HepG2 (cell line): ENCODE measurements at regions of chr9 and their contacts with region 1.

Region 1: DNA sequence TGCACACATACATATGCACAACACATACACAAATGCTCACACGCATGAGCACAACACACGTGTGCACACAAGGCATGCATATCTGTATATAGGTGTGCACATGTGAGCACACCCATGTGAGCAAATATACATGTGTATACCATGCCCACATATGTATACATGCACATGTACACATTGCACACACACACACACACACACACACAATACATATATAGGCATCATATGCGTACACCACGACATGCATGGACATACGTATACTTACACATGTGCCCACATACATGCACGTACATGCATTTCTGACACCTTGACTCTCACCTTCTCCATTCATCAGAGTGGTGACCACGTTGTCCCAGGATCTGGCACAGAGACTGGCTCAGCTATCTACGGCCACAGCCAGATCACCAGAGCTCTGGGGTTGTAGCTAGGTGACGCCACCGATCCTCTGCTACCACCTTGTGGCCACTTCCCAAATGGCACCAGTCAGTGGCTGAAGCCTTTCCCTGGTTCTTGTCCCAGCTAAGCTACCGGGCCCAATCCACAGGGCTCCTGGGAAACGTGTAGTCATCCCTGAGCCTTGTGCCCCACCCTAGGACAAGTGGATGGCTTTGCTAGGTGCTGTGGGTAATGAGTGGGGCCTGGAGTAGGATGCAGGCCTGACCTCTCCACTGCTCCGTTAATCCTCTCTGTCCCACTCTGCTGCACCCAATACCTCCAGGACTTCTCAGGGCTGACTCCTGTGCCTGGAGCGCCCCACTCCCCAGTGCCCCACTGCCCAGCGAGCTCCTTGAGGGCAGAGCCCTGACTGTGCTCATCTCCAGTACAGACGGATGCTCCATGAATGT is 194.4 kb downstream of the RGS3 start:
- DNase-seq: peak; percentile 73
- ATAC-seq: peak; percentile 92
- H3K4me3 ChIP-seq: no peak overlapping the region
- H3K27ac ChIP-seq: no peak overlapping the region
- H3K4me1 ChIP-seq: peaks cover 65% of the 10 kb centered on the region
- H3K27me3 ChIP-seq: peaks cover 0 to 19% of the 10 kb centered on the region in 2 experiments; a peak in 2 of 5 replicates
- CTCF ChIP-seq: peak; percentile 99
- EP300 ChIP-seq: no peak
- POLR2A ChIP-seq: no peak
- RAD21 ChIP-seq: peak; percentile 99

Region 2: DNA sequence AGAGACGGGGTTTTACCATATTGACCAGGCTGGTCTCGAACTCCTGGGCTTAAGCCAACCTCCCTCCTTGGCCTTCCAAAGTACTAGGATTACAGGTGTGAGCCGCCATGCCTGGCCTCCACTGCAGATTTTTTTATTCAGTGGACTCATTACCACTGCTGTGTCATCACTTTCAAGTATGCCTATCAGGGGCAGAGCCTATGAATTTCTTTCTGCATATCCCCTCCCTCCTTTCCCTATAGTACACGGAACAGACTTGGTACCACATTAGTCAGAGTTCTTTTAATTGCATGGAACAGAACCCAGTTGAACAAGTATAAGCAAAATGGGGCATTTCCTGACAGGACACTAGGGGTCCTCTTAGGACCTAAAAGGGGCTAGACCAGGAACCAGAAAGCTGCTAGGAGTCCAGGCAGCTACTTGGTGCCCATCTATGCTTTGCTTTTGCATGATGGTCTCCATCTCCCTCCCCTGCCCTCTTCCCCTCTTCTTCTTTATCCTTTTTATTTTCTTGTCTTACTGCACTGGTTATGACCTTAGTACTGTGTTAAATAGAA is 302.8 kb before region 1 on chr9:
- CTCF ChIA-PET with region 1: interaction called, 3 read pairs
- POLR2A ChIA-PET with region 1: no interaction called
- in situ Hi-C with region 1: no loop called
- intact Hi-C with region 1: loop called (anchors 5 kb)
- DNase-seq: peak; percentile 77
- ATAC-seq: peak; percentile 88
- H3K4me3 ChIP-seq: no peak overlapping the region
- H3K27ac ChIP-seq: no peak overlapping the region
- H3K4me1 ChIP-seq: peaks cover 32% of the 10 kb centered on the region
- H3K27me3 ChIP-seq: peaks cover 0 to 14% of the 10 kb centered on the region in 2 experiments; a peak in 3 of 5 replicates
- CTCF ChIP-seq: peak; percentile 76
- EP300 ChIP-seq: no peak
- POLR2A ChIP-seq: no peak
- RAD21 ChIP-seq: peak; percentile 81

Region 3: GRCh38 chr9:113446323-113446740 is 211.6 kb before region 1 on chr9:
- CTCF ChIA-PET with region 1: interaction called, 34 read pairs
- POLR2A ChIA-PET with region 1: interaction called, 4 read pairs
- in situ Hi-C with region 1: loop called (anchors 5 kb)
- intact Hi-C with region 1: loop called (anchors 2 kb)
- DNase-seq: peak; percentile 47
- ATAC-seq: peak; percentile 43
- H3K4me3 ChIP-seq: no peak overlapping the region
- H3K27ac ChIP-seq: no peak overlapping the region
- H3K4me1 ChIP-seq: peaks cover 22% of the 10 kb centered on the region
- H3K27me3 ChIP-seq: no peaks in the 10 kb centered on the region
- CTCF ChIP-seq: peak; percentile 66
- EP300 ChIP-seq: no peak
- POLR2A ChIP-seq: no peak
- RAD21 ChIP-seq: peak; percentile 73

Region 4: DNA sequence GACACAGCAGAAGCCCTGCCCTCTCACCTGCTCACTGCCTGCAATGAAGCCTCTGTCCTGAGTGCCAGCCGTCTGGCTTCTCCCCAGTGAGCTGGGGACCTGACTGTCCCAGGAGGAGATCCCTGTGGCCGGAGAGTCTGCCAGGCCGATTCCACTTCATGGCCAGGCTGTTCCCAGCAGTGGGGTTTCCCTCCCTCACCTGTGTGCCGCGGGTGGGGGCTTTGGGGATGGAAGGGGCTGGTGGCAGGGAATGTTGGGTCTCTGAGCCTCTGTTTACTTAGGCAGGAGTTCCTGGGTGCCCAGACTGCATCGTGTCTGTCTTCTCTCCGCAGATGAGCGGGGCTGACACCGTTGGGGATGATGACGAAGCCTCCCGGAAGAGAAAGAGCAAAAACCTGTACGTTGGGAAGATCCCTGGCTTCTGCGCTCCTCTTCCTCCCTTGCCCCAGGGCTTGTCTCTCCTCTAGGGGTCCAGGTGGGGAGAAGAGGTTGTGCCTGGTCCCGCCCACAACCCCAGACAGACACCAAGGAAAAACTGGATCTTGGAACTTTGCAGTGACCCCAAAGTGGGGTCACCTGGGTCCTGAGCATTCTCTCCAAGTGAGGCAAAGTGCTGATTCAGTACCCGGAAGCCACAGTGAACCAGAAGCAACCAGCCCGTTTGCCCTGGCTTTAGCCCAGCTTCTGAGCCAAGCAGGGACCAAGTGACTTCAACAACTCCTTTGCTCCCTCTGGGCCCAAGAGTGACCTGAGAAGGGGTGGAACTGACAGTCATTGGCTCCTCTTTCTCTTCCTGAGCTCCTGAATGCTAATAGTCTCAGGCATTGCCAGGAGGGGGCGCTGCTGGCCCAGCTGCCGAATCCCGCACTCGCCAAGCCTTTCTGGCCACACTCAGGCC is 66.7 kb before region 1 on chr9:
- CTCF ChIA-PET with region 1: interaction called, 223 read pairs
- POLR2A ChIA-PET with region 1: interaction called, 16 read pairs
- in situ Hi-C with region 1: loop called (anchors 5 kb)
- intact Hi-C with region 1: loop called (anchors 1 kb)
- DNase-seq: peak; percentile 59
- ATAC-seq: peak; percentile 71
- H3K4me3 ChIP-seq: no peak overlapping the region
- H3K27ac ChIP-seq: no peak overlapping the region
- H3K4me1 ChIP-seq: peaks cover 32% of the 10 kb centered on the region
- H3K27me3 ChIP-seq: no peaks in the 10 kb centered on the region
- CTCF ChIP-seq: peak; percentile 96
- EP300 ChIP-seq: no peak
- POLR2A ChIP-seq: no peak
- RAD21 ChIP-seq: peak; percentile 98